Naive thymus-derived CD4-positive, alpha-beta T cell (primary cell): ENCODE measurements at regions of chr13 and their contacts with region 1.

Region 1: DNA sequence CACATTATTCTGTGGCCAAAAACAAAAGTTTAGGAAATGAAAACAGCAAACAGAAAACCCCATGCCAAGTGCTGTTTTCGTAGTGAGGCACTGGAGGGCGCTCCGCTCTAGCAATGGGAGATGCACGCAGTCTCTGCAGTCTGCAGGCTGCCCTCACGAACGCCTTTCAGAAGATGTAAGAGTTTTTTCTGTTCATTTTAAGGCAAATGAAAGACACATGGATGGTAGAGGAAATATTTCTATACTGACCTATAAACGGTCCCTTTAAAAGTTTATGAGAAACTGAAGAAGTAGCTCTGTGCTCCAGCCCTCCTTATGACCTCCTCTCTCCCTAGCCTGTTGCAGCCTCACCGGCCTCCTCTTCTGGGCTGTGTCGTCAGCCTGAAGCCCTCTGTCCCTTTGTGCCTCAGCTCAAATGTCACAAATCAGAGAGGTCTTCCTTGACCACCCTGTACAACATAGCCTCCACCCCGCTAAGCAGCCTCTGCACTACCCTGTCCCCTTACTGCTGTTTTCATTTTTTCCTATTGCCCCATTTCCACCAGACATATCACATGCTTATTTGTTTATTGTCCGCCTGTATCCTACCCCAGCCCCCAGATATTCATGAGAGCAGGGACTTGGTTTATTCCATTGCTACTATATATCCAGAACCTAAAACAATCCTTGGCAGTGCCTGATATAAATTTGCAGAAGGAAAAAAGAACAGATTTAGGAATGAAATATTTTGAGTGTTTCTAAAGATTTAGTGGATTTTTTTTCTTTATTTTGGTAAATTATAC is 116.4 kb downstream of the TM9SF2 start:
- DNase-seq: peak in 2 of 9 donors; percentile 19 to 20
- ATAC-seq: peak; percentile 56
- H3K4me3 ChIP-seq: no peak overlapping the region
- H3K4me3 Mint-ChIP-seq: no peak overlapping the region
- H3K27ac ChIP-seq: no peak overlapping the region
- H3K27ac Mint-ChIP-seq: peak overlapping the region in 1 of 9 donors; percentile 2
- H3K4me1 ChIP-seq: no peaks in the 10 kb centered on the region
- H3K4me1 Mint-ChIP-seq: peaks cover 6 to 40% (median 24%) of the 10 kb centered on the region in 7 donors
- H3K27me3 ChIP-seq: no peaks in the 10 kb centered on the region
- H3K27me3 Mint-ChIP-seq: peaks cover 0 to 6% (median 0%) of the 10 kb centered on the region in 5 donors

Region 2: DNA sequence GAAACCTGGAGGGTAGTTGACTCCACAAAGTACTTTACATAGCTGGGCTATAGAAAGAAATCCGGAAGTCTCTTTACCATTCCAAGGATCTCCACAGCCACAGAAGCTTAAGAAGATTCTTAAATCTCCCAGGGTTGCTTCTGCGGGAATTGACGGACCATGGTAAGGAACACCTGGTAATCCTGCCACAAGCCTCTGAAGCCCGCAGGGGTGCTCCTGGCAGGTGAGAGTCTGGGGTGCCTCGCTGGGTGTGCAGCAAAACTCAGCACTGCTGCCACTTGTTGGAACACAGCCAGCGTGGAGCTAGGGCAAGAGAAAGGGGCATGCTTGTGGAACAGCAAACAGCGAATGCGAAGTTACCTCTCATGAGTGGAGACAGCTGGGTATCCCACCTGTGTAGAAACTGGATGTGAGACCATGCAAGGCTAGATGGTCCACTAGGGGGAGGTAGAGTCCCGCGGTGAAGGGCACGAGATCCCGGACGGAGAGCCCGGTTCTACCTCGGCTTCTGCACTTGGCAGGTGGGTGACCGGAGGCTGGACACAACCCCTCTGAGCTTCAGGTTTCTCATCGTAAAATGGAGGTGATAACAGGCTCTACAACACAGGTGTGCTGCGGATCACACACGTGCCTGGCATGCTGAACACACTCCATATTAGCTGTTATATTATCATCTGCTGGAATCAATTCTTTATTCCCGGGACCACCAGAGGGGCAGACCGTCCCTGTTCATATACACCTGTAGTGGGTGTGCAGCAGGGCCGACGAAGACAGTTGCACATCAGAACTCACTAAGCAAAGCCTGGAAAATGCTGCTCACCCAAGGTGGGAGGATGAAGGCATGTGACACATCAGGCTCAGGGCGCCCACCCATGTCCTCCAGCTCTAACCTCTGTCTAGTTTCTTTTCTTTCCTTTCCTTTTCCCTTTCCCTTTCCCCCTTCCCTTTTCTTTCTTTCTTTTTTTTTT is 441.1 kb before region 1 on chr13:
- CTCF ChIA-PET with region 1: no interaction called
- POLR2A ChIA-PET with region 1: no interaction called
- intact Hi-C with region 1: loop called in 1 of 2 experiments (anchors 10 kb)
- DNase-seq: peak; percentile 54 to 79 (median 71)
- ATAC-seq: peak; percentile 95
- H3K4me3 ChIP-seq: peak overlapping the region; percentile 1
- H3K4me3 Mint-ChIP-seq: peak overlapping the region; percentile 39 to 81 (median 72)
- H3K27ac ChIP-seq: no peak overlapping the region
- H3K27ac Mint-ChIP-seq: peak overlapping the region in 8 of 9 donors; percentile 34 to 77 (median 54)
- H3K4me1 ChIP-seq: peaks cover 22 to 24% of the 10 kb centered on the region in 2 donors
- H3K4me1 Mint-ChIP-seq: peaks cover 26 to 44% (median 39%) of the 10 kb centered on the region in 7 donors
- H3K27me3 ChIP-seq: no peaks in the 10 kb centered on the region
- H3K27me3 Mint-ChIP-seq: peaks cover 0 to 13% (median 0%) of the 10 kb centered on the region in 5 donors

Region 3: GRCh38 chr13:99528547-99528946 is 89.1 kb before region 1 on chr13:
- CTCF ChIA-PET with region 1: interaction called, 15 read pairs
- POLR2A ChIA-PET with region 1: no interaction called
- intact Hi-C with region 1: loop called in 1 of 2 experiments (anchors 1 kb)
- DNase-seq: peak in 6 of 9 donors; percentile 9 to 57 (median 48)
- ATAC-seq: peak; percentile 68
- H3K4me3 ChIP-seq: no peak overlapping the region
- H3K4me3 Mint-ChIP-seq: peak overlapping the region in 2 of 10 donors; percentile 12 to 25
- H3K27ac ChIP-seq: no peak overlapping the region
- H3K27ac Mint-ChIP-seq: no peak overlapping the region
- H3K4me1 ChIP-seq: peaks cover 8 to 17% of the 10 kb centered on the region in 2 donors
- H3K4me1 Mint-ChIP-seq: peaks cover 33 to 63% (median 47%) of the 10 kb centered on the region in 7 donors
- H3K27me3 ChIP-seq: no peaks in the 10 kb centered on the region
- H3K27me3 Mint-ChIP-seq: no peaks in the 10 kb centered on the region

Region 4: DNA sequence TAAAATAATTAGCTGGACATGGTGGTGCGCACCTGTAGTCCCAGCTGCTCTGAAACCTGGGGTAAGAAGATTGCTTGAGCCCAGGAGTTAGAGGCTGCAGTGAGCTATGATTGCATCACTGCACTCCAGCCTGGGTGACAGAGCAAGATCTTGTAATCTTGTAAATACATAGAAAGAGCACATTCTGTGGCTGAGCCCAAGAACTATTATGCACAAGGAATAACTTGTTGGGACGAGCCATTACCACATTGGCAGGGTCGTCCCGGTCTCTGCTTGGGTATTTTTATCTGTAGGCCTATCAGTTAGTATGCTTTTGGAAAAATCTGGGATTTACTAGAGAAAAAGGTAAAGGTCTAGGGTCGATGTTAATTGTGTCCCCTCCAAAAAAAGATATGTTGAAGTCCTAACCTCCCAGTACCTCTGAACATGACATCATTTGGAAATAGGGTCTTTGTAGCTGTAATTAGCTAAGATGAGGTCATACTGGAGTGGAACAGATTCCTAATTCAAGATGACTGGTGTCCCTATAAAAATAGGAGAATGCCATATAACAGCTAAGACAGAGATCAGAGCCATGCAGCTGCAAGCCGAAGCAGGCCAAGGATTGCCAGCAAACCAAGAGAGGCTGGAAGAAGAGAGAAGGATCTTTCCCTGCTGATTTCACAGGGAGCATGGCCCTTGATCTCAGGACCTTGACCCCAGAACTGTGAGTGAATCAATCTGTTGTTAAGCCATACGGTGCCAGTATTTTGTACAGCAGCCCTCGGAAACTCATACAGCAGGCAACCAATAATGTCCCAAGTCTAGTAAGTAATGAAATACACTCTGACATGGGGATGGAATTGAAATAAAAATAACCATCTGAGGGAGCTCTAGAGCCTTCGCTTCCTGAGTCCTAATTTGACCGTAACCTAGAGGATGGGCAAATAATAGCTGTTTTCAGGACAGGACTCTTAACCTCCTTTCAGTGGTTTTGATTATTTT is 39.4 kb before region 1 on chr13:
- CTCF ChIA-PET with region 1: interaction called, 5 read pairs
- POLR2A ChIA-PET with region 1: no interaction called
- intact Hi-C with region 1: loop called in 1 of 2 experiments (anchors 1 kb)
- DNase-seq: no peak
- ATAC-seq: no peak
- H3K4me3 ChIP-seq: no peak overlapping the region
- H3K4me3 Mint-ChIP-seq: no peak overlapping the region
- H3K27ac ChIP-seq: no peak overlapping the region
- H3K27ac Mint-ChIP-seq: peak overlapping the region in 3 of 9 donors; percentile 21 to 79 (median 37)
- H3K4me1 ChIP-seq: no peaks in the 10 kb centered on the region
- H3K4me1 Mint-ChIP-seq: peaks cover 0 to 13% (median 2%) of the 10 kb centered on the region in 7 donors
- H3K27me3 ChIP-seq: no peaks in the 10 kb centered on the region
- H3K27me3 Mint-ChIP-seq: peaks cover 0 to 2% (median 0%) of the 10 kb centered on the region in 5 donors